Activated CD4-positive, alpha-beta memory T cell treated with anti-CD3 and anti-CD28 coated beads for 36 hours (primary cell): ENCODE measurements at regions of chr7 and their contacts with region 1.

Region 1: DNA sequence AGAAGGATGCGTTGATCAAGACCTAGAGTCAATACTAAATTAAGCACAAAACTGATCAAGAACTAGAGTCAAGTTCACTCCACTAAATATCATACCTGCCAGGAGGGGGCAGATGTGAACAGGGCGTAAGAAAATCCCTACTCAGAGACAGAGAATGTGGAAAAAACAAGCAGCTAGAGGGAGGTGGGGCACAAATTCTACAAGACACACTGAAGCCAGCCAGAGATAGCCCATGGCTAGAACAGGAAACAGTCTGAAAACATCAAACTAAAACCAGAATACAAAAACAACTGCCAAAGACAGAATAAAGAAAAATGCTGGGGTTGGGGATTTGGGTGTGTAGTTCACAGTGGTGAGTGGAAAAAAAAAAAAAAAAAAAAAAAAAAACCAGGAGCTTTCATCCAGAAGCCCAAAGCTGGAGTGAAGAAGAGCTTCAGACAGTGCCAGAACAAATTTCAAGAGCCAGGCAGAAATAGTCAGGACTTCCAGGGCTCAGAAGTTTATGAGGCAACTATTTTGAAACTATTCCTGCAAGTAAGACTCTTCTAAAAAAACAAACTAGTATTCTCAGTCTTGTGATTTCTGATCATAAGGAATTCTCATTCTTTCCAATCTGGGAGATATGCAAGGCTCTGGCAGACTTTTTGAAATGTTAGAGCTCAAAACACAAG is 118.3 kb downstream of the CCDC71L start:
- DNase-seq: peak; percentile 64
- H3K4me3 Mint-ChIP-seq: no peak overlapping the region
- H3K27ac Mint-ChIP-seq: peak overlapping the region; percentile 11
- H3K4me1 Mint-ChIP-seq: peaks cover 22% of the 10 kb centered on the region
- H3K27me3 Mint-ChIP-seq: no peaks in the 10 kb centered on the region

Region 2: GRCh38 chr7:106176414-106177299 is 366.0 kb before region 1 on chr7:
- CTCF ChIA-PET with region 1: interaction called, 8 read pairs
- POLR2A ChIA-PET with region 1: no interaction called
- intact Hi-C with region 1: loop called (anchors 5 kb)
- DNase-seq: peak; percentile 80
- H3K4me3 Mint-ChIP-seq: no peak overlapping the region
- H3K27ac Mint-ChIP-seq: no peak overlapping the region
- H3K4me1 Mint-ChIP-seq: peaks cover 5% of the 10 kb centered on the region
- H3K27me3 Mint-ChIP-seq: peaks cover 13% of the 10 kb centered on the region

Region 3: DNA sequence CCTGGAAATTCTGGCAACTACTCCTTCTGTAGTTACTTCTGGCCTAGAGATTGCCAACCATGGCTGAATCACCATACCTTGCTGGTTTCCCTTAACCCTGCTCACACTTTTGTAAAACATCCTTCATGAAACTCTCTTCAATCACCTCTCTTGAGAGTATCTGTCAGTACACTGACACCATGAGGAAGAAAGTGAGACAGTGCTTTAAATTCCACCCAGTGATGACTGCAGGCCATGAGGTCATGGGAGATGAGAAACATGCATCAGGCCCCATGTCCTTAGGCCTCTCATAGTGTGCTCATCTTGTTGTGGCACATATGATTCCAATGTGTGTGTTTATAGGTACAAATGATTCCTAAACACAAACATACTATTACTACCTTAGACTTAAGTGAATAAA is 233.3 kb before region 1 on chr7:
- CTCF ChIA-PET with region 1: no interaction called
- POLR2A ChIA-PET with region 1: no interaction called
- intact Hi-C with region 1: no loop called
- DNase-seq: peak; percentile 52
- H3K4me3 Mint-ChIP-seq: no peak overlapping the region
- H3K27ac Mint-ChIP-seq: peak overlapping the region; percentile 38
- H3K4me1 Mint-ChIP-seq: peaks cover 27% of the 10 kb centered on the region
- H3K27me3 Mint-ChIP-seq: peaks cover 14% of the 10 kb centered on the region

Region 4: GRCh38 chr7:106367018-106367420 is 175.7 kb before region 1 on chr7:
- CTCF ChIA-PET with region 1: no interaction called
- POLR2A ChIA-PET with region 1: no interaction called
- intact Hi-C with region 1: no loop called
- DNase-seq: peak; percentile 9
- H3K4me3 Mint-ChIP-seq: no peak overlapping the region
- H3K27ac Mint-ChIP-seq: peak overlapping the region; percentile 64
- H3K4me1 Mint-ChIP-seq: peaks cover 45% of the 10 kb centered on the region
- H3K27me3 Mint-ChIP-seq: peaks cover 18% of the 10 kb centered on the region

Region 5: DNA sequence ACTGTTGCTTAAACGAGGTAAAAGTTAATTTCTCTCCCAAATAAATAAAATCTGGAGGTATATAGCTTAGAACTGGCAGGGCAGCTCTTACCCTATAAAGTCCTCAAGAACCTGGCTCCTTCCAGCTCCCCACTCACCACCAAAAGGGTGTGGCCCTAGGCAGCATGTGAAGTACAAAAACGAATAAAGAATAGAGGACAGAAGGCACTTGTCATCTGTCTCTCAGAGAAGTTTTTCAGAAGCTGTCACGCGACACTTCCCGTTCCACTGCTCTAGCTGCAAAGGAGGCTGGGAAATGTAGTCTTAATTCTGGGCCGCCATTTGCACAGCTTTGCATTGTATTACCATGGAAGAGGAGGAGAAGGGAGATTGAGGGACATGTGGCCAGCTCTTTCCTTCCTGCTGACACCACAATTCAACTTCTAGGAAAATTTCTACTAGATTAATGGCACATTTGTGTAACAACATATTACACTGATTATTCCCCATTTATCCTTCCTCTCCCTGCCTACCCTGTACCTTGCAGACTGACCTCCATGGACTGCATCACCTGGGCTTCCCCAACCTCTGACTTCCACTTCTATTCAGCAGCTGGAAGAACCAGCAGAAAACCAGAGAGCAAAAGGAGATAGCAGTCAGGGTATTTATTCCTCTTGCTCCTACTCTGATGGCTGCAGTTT is 56.1 kb after region 1 on chr7:
- CTCF ChIA-PET with region 1: interaction called, 18 read pairs
- POLR2A ChIA-PET with region 1: no interaction called
- intact Hi-C with region 1: loop called (anchors 1 kb)
- DNase-seq: peak; percentile 81
- H3K4me3 Mint-ChIP-seq: no peak overlapping the region
- H3K27ac Mint-ChIP-seq: no peak overlapping the region
- H3K4me1 Mint-ChIP-seq: peaks cover 4% of the 10 kb centered on the region
- H3K27me3 Mint-ChIP-seq: peaks cover 6% of the 10 kb centered on the region

Region 6: DNA sequence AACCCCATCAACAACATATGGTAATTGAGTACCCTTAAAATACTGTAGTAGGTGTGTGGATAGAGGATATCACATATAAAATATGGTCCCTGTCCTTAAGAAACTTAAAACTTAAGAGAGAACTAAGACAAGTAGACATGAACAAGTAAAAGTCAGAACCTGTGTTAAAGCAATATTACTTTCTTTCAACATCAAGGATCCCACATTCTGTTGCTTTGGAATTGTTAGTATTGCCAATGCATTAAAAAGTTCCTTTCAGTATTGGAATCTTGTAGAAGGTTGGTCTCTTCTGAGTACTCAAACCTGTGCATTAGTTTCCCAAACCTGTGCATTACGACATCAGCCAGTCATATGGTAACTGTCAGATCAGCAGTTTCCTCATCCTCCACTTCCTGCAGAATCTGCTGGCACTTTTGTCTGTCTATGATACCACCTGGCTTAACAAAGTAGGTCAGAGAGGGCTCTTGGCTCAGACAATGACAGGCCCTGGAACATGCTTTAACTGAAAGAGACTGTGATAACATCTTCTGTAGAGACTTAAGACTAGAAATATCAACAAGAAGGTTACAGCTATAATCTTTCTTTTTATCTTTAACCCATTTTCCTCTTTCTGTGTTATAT is 61.7 kb after region 1 on chr7:
- CTCF ChIA-PET with region 1: interaction called, 18 read pairs
- POLR2A ChIA-PET with region 1: no interaction called
- intact Hi-C with region 1: loop called (anchors 1 kb)
- DNase-seq: peak; percentile 68
- H3K4me3 Mint-ChIP-seq: no peak overlapping the region
- H3K27ac Mint-ChIP-seq: no peak overlapping the region
- H3K4me1 Mint-ChIP-seq: peaks cover 15% of the 10 kb centered on the region
- H3K27me3 Mint-ChIP-seq: no peaks in the 10 kb centered on the region